ENCODE measurements at regions of chr19 and their contacts with region 1.

Region 1: GRCh38 chr19:40662921-40663694 is 27.3 kb downstream of the NUMBL start:
- DNase-seq: peak; percentile 90
- H3K4me3 Mint-ChIP-seq: peak overlapping the region; percentile 76
- H3K27ac Mint-ChIP-seq: peak overlapping the region; percentile 89
- H3K4me1 Mint-ChIP-seq: peaks cover 16% of the 10 kb centered on the region
- H3K27me3 Mint-ChIP-seq: no peaks in the 10 kb centered on the region

Region 2: DNA sequence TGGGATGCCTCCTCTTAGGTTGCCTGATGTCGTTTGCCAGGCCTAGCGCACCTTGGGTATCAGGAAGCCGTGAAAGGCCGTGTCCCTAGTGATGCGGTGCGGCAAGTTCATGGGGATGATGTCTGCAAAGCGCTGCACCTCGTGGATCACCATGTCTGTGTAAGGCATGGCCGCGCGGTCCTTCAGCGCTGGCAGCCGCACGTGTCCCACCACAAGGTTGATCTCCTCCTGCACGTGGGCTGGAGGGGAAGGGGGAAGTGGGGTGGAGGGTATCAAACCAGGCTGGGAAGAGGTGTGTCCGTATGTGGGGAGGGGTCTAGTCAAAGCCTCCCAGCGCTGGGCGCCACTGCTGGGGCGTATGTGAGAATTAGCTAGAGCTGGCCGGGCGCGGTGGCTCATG is 159.1 kb after region 1 on chr19:
- CTCF ChIA-PET with region 1: interaction called, 11 read pairs
- POLR2A ChIA-PET with region 1: no interaction called
- DNase-seq: no peak
- H3K4me3 Mint-ChIP-seq: no peak overlapping the region
- H3K27ac Mint-ChIP-seq: no peak overlapping the region
- H3K4me1 Mint-ChIP-seq: peaks cover 51% of the 10 kb centered on the region
- H3K27me3 Mint-ChIP-seq: no peaks in the 10 kb centered on the region